Calu3 (cell line): ENCODE measurements at regions of chr12 and their contacts with region 1.

Region 1: DNA sequence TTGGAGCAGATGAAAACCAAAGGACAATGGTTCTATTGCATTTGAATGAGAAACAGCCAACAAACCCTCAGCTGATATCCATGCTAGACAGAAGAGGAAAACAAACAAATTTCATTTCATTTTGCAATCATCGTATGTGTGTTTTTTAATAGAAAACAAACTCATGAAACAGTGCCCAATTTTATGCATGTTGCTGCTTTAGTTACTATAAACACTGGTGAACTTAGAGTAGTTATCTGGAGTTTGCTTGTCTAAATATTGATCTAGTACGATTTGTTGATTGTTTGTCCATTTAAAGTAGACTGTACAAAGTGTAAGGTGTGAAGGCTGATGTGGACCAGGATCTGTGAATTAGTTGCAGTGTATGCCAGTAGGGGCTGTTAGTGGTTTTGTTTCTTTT is 166.6 kb downstream of the KITLG start:
- DNase-seq: no peak
- H3K4me3 Mint-ChIP-seq: no peak overlapping the region
- H3K27ac Mint-ChIP-seq: no peak overlapping the region
- H3K4me1 Mint-ChIP-seq: peaks cover 12% of the 10 kb centered on the region
- H3K27me3 Mint-ChIP-seq: no peaks in the 10 kb centered on the region
- CTCF ChIP-seq: no peak

Region 2: DNA sequence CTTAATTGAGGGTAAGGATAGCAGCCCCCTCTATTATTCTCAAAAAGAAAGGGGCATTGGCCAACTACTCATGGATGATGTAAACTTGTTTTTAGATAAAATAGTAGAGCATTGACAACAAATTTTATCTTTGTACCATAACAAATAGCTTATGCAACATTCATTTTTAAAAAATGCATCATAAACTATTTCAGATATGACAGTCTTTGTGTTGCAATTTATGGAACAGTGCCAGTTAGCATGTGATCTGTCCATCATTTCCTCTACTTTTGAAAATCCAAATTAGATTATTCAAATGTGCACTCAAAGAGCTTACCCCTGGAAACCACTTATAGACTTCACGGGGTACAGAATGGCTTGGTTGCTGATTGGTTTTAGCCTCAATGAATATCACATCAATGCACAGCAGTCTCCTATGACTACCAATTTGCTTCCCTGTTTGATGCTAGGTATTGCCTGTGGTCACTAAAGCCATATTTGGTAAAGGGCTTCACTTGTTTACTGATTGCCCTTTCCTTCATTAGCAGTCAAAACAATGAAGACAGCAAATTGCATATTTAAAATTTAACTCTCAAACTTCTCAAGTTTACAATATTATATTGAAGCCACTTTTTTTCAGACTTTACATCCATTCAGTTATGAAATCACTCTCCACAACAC is 1882.5 kb before region 1 on chr12:
- CTCF ChIA-PET with region 1: interaction called, 10 read pairs
- intact Hi-C with region 1: no loop called
- DNase-seq: no peak
- H3K4me3 Mint-ChIP-seq: no peak overlapping the region
- H3K27ac Mint-ChIP-seq: no peak overlapping the region
- H3K4me1 Mint-ChIP-seq: no peaks in the 10 kb centered on the region
- H3K27me3 Mint-ChIP-seq: no peaks in the 10 kb centered on the region
- CTCF ChIP-seq: no peak

Region 3: DNA sequence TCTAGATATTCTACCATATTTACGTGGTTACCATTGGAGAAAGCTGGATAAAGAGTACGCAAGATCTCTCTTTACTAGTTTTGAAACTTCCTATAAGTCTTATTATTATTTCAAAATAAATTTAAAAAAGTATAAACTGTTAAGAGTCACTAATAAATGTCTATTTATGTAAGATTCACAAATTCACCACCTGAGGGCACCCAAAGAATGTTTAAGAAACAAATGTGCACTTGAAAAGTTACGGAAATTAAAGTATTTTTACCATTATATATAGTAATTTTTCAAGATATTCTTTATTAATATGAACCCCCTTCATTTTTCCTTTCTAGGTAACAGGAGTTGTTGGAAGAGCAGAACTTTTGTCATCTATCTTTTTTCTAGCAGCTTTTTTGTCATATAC is 259.7 kb before region 1 on chr12:
- CTCF ChIA-PET with region 1: no interaction called
- intact Hi-C with region 1: no loop called
- DNase-seq: peak; percentile 16
- H3K4me3 Mint-ChIP-seq: no peak overlapping the region
- H3K27ac Mint-ChIP-seq: no peak overlapping the region
- H3K4me1 Mint-ChIP-seq: no peaks in the 10 kb centered on the region
- H3K27me3 Mint-ChIP-seq: no peaks in the 10 kb centered on the region
- CTCF ChIP-seq: peak; percentile 54

Region 4: DNA sequence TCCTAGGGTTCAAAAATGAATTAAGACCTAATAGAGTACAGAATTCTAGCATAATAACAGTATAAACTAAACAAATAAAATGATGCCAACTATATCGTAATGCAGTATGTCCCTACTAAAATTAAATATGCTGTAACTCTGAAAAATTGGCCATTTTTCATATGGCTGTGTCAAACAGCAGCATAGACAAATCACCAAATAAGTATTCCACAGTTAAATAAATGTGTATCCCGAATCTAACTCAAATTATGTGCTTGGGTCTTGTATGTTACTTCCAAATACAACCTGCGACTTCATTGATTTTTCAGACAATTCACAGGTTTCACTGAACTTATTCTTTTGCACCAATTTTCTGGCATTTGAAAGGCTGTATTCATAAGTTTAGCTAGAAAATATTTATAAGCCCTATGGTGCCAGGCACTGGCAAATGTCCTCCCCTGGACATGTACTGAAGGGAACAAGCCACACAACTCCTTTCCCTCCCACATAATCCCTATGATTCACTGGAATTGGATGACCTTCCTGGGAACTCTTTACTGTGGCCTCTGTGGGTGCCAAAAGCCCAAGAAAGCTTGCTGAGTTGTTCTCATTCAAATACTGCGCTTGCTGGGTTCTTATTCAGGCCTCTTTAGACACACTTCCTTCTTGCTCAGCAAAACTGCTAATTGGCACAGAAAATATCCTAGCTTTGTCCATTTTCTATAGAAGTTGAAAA is 57.8 kb after region 1 on chr12:
- CTCF ChIA-PET with region 1: no interaction called
- intact Hi-C with region 1: no loop called
- DNase-seq: no peak
- H3K4me3 Mint-ChIP-seq: no peak overlapping the region
- H3K27ac Mint-ChIP-seq: no peak overlapping the region
- H3K4me1 Mint-ChIP-seq: no peaks in the 10 kb centered on the region
- H3K27me3 Mint-ChIP-seq: no peaks in the 10 kb centered on the region
- CTCF ChIP-seq: no peak

Region 5: GRCh38 chr12:88570103-88570502 is 156.5 kb after region 1 on chr12:
- CTCF ChIA-PET with region 1: no interaction called
- intact Hi-C with region 1: loop called (anchors 5 kb)
- DNase-seq: no peak
- H3K4me3 Mint-ChIP-seq: no peak overlapping the region
- H3K27ac Mint-ChIP-seq: peak overlapping the region; percentile 39
- H3K4me1 Mint-ChIP-seq: peaks cover 87% of the 10 kb centered on the region
- H3K27me3 Mint-ChIP-seq: no peaks in the 10 kb centered on the region
- CTCF ChIP-seq: no peak